GM13976 (cell line): ENCODE measurements at regions of chrX and their contacts with region 1.

Region 1: DNA sequence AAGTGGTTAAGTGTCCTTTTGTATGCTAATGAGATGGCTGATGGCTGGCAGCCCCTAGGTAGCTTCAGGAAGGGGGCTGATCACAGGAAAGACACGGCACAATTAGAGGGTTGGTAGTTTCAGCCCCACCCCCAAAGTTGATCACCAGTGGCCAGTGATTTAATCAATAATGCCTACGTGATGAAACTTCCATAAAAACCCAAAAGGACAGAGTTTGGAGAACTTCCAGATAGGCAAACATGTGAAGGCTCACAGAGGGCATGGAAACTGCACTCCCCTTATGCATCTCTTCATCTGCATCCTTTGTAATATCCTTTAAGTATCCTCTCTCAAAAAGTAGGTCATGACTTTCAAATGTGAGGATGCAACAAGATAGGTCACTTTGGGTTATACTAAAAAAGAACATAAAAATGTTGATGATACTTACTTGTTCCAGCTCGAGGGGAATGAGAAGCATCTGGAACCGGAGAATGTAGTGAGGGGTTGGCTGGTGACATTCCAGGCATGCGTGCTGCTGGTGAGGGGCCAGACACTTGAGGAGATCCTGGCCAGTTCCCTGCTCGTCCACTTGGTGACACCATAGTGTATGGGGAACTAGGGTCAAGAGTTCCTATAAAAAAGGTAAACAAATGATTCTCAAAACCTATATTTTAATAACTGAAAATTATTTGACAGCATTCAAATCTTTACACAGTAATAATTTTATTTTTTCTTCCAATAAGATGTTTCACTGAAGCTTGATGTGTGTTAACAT is 16.7 kb upstream of the CXorf38 start:
- DNase-seq: no peak
- CTCF ChIP-seq: peak; percentile 26

Region 2: DNA sequence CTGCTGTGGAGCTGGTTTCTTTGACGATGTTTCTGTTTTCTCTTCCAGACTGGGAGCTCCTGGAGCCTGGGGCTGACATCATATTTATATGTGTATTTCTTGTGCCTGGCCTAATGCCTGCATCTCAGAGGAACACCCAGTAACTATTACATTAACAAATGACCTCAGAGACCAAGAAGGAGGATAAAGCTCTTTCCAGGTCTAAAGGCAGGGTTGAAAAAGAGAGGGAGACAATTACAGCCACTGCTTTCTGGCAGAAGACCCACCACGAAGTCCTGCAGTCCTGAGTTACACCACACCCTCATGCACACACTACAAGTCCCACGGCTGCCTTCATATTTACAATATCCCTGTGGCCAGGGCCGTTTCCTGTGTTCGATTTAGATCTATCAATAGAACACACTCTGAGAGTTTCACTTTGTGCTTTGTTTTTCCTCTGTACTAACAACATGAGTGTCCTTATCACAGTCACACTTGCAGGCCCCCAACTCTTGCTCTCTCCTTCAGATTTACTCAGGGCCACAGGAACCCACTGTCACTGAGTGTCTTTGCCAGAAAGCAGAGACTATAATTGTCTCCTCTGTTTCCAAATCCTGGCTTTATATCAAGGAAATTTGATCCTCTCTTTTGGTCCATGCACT is 1327.3 kb before region 1 on chrX:
- in situ Hi-C with region 1: no loop called
- DNase-seq: peak; percentile 9
- CTCF ChIP-seq: no peak

Region 3: DNA sequence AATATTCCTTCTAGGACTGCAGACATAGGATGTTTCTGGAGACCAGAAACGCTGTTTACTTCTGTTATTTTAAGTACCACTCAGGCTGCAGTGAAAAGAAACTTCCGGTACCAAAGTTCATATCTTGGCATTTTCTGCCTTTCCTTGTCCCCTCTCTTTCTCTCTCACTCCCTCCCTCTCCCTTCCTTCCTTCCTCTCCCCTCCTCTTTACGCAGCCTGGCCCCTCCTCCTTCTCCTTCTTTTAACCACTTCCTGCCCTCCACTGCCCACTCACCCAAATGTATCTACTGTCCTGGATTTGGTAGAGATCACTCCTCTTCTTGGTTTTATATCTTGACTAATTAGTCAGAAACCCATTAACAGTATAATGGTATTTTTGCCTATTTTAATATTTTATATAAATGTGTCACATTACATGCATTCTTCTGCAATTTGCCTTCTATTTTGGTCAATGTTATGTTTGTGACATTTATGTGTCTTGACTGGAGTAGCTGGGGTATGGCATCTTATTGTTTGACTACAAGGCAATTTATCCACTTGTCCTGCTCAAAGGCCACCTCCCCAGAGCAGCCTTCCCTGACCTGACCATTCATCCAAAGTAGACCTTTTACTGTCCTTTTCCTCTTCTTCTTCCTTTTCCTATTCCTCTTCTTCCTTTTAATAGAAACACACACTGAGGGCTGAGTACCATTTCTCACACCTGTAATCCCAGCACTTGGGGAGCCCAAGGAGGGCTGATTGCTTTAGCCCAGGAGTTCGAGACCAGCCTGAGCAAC is 623.2 kb before region 1 on chrX:
- in situ Hi-C with region 1: no loop called
- DNase-seq: no peak
- CTCF ChIP-seq: no peak

Region 4: GRCh38 chrX:41116948-41117347 is 452.9 kb after region 1 on chrX:
- in situ Hi-C with region 1: loop called (anchors 10 kb)
- DNase-seq: peak; percentile 46
- CTCF ChIP-seq: no peak